ENCODE measurements at regions of chr9 and their contacts with region 1.

Region 1: GRCh38 chr9:114271641-114272081 is 51.2 kb upstream of the ORM1 start:
- DNase-seq: peak; percentile 57
- H3K4me3 Mint-ChIP-seq: no peak overlapping the region
- H3K27ac Mint-ChIP-seq: no peak overlapping the region
- H3K4me1 Mint-ChIP-seq: no peaks in the 10 kb centered on the region
- H3K27me3 Mint-ChIP-seq: no peaks in the 10 kb centered on the region
- CTCF ChIP-seq: no peak

Region 2: GRCh38 chr9:113632776-113633590 is 638.7 kb before region 1 on chr9:
- CTCF ChIA-PET with region 1: no interaction called
- intact Hi-C with region 1: no loop called
- DNase-seq: no peak
- H3K4me3 Mint-ChIP-seq: no peak overlapping the region
- H3K27ac Mint-ChIP-seq: no peak overlapping the region
- H3K4me1 Mint-ChIP-seq: peaks cover 8% of the 10 kb centered on the region
- H3K27me3 Mint-ChIP-seq: no peaks in the 10 kb centered on the region
- CTCF ChIP-seq: no peak

Region 3: GRCh38 chr9:114155263-114155972 is 116.2 kb before region 1 on chr9 and contains the start of gene COL27A1:
- CTCF ChIA-PET with region 1: no interaction called
- intact Hi-C with region 1: loop called (anchors 5 kb)
- DNase-seq: peak; percentile 89
- H3K4me3 Mint-ChIP-seq: peak within 1 kb of the TSS; percentile 58
- H3K27ac Mint-ChIP-seq: peak within 1 kb of the TSS; percentile 52
- H3K4me1 Mint-ChIP-seq: peaks cover 31% of the 10 kb centered on the region
- H3K27me3 Mint-ChIP-seq: peaks cover 16% of the 10 kb centered on the region
- CTCF ChIP-seq: peak; percentile 76
- total RNA-seq, gene COL27A1: 20.1 and 21.4 TPM in 2 replicates